ENCODE measurements at regions of chr7 and their contacts with region 1.

Region 1: DNA sequence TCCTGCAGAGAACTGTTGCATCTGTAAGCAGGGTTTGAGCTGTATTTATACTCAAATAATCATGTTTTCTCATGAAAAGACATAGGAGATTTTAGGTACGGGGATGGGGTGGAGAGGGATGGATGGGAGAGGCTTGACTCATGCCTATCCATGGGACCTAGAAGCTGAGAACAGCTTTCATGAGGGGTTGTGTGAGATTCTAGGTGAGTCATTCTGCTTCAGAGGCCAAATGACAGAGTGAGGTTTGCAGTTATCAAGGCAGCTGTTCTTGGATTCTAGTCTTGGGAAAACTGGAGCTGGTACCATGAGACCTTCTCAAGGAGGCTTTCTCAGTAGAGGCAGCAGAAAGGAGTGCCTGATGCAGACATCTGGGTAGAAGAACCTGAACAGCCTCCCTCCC is 746.9 kb downstream of the TYW1 start:
- DNase-seq: no peak
- H3K4me3 ChIP-seq: no peak overlapping the region
- H3K27ac ChIP-seq: no peak overlapping the region
- H3K4me1 ChIP-seq: no peaks in the 10 kb centered on the region
- H3K27me3 ChIP-seq: no peaks in the 10 kb centered on the region

Region 2: DNA sequence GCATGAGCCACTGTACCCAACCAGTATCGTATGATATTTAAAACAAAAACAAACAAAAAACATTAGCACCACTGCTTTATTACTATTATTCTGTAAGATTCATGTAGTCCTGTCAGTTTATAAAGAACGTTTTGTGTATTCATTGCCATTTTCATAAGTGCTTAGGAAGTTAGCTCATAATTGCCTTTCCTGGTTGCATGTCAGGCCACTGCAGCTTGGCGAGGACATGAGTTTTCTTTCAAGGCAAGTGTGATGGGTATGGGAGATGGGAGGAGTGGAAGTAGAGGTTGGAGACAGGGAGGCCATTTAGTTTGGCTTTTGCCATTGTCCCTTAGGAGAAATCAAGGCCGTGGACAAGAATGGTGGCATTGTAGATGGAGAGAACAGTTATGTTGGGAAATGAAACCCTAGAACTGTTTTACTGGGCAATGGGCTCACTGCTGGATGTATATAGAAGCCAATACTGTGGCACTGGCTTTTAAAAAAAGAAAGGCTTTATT is 698.0 kb before region 1 on chr7:
- CTCF ChIA-PET with region 1: no interaction called
- POLR2A ChIA-PET with region 1: interaction called, 11 read pairs
- DNase-seq: no peak
- H3K4me3 ChIP-seq: no peak overlapping the region
- H3K27ac ChIP-seq: no peak overlapping the region
- H3K4me1 ChIP-seq: peaks cover 0 to 4% (median 1%) of the 10 kb centered on the region in 4 experiments
- H3K27me3 ChIP-seq: no peaks in the 10 kb centered on the region